Left ventricle myocardium superior (tissue), 1 donor: ENCODE measurements at regions of chr9 and their contacts with region 1.

Region 1: GRCh38 chr9:122464633-122465567 is 12.8 kb downstream of the OR1J1 start:
- DNase-seq: peak; percentile 47
- ATAC-seq: peak; percentile 76

Region 2: DNA sequence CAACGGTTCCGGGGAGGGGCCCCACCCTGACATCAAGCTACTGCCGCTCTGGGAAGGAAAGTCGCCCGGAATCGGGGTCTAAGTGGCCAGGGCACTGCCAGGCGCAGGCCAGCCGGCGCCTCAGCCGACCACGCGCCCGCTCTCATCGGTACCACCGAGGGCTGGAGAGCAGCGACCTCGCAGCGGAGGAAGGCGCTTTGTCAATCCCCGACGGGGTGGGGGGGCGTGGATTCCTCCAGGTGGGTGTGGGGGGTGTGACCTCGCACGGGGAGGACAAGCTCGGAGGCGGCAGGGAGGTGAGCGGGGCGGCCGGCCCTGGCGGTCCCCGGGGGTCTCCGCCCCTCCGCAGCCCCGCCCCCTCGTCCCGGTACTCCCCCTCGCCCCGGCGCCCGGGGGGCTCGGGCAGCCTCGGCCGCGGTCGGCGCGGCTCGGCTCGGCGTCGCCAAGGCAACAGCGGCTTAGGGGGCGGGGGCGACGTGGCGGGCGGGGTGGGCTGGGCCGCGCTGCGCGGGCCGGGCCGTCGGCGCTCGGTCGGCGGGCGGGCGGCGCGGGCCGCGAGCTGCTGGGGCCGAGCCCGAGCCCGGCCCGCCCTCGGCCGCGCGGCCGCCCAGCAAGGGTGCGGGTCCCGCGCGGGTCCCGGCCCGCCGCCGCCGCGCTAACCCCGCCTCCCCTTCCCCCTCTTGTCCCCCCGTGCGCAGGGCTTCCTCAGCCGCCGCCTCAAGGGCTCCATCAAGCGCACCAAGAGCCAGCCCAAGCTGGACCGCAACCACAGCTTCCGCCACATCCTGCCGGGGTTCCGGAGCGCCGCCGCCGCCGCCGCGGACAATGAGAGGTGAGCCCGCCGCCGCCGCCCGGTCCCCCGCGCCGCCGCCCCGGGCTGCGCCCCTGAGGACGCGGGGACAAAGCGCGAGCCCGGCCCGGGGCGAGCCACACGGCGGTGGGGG is 766.0 kb before region 1 on chr9:
- intact Hi-C with region 1: no loop called
- DNase-seq: peak; percentile 81
- ATAC-seq: peak; percentile 21

Region 3: GRCh38 chr9:122810306-122810946 is 345.5 kb after region 1 on chr9:
- intact Hi-C with region 1: loop called (anchors 2 kb)
- DNase-seq: peak; percentile 65
- ATAC-seq: peak; percentile 88